ENCODE measurements at regions of chr6 and their contacts with region 1.

Region 1: DNA sequence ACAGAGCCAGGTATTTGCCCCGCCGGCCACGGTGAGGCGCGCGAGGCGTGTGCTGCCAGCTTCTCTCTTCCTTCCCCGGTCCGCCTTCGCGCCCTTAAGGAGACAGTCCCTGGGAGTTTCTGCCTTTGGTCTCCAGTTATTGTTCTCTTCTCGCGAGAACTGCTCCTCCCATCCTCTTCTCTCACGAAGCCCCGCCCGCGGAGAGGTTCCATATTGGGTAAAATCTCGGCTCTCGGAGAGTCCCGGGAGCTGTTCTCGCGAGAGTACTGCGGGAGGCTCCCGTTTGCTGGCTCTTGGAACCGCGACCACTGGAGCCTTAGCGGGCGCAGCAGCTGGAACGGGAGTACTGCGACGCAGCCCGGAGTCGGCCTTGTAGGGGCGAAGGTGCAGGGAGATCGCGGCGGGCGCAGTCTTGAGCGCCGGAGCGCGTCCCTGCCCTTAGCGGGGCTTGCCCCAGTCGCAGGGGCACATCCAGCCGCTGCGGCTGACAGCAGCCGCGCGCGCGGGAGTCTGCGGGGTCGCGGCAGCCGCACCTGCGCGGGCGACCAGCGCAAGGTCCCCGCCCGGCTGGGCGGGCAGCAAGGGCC is at the start of gene MAPK14:
- DNase-seq: peak; percentile 99
- H3K4me3 Mint-ChIP-seq: peak within 1 kb of the TSS; percentile 83
- H3K27ac Mint-ChIP-seq: peak within 1 kb of the TSS; percentile 86
- H3K4me1 Mint-ChIP-seq: peaks cover 16% of the 10 kb centered on the region
- H3K27me3 Mint-ChIP-seq: no peaks in the 10 kb centered on the region
- CTCF ChIP-seq: peak; percentile 84
- total RNA-seq, gene MAPK14: 59.5 and 60.9 TPM in 2 replicates

Region 2: GRCh38 chr6:35920793-35921732 is 106.5 kb before region 1 on chr6 and contains the start of gene SRPK1:
- CTCF ChIA-PET with region 1: no interaction called
- intact Hi-C with region 1: loop called (anchors 5 kb)
- DNase-seq: peak; percentile 93
- H3K4me3 Mint-ChIP-seq: peak within 1 kb of the TSS; percentile 95
- H3K27ac Mint-ChIP-seq: peak within 1 kb of the TSS; percentile 92
- H3K4me1 Mint-ChIP-seq: peaks cover 35% of the 10 kb centered on the region
- H3K27me3 Mint-ChIP-seq: no peaks in the 10 kb centered on the region
- CTCF ChIP-seq: no peak
- total RNA-seq, gene SRPK1: 126 and 138 TPM in 2 replicates

Region 3: DNA sequence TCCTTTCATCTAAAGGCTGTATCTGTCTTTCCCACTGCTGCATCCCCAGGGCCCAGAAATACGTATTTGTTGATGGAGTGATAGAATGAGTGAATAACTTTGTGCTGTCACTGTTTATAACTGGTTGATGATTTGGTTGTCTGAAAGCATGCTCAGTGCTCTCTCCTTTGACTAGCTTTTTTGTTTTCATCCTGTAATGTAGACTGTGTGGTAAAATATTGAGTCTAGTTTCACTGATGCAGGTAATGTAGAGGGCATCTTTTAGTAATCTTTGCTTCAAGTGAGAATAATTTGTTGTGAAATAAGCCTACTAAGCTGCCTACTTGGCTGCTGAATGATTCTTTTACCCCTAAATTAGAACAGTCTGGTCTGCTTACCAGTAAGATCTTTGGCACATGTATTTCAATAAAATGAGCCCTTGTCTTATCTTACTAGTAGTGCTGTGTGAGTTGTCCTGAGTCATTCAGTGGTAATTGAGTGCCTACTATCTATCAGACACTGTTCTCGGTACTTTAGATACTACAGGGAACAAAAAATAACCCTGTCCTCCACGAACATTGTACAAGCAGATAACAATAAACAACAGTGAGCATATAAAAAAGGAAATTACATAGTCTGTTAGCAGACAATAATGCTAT is 39.9 kb after region 1 on chr6:
- CTCF ChIA-PET with region 1: interaction called, 4 read pairs
- intact Hi-C with region 1: loop called (anchors 5 kb)
- DNase-seq: no peak
- H3K4me3 Mint-ChIP-seq: no peak overlapping the region
- H3K27ac Mint-ChIP-seq: peak overlapping the region; percentile 18
- H3K4me1 Mint-ChIP-seq: peaks cover 47% of the 10 kb centered on the region
- H3K27me3 Mint-ChIP-seq: no peaks in the 10 kb centered on the region
- CTCF ChIP-seq: no peak

Region 4: DNA sequence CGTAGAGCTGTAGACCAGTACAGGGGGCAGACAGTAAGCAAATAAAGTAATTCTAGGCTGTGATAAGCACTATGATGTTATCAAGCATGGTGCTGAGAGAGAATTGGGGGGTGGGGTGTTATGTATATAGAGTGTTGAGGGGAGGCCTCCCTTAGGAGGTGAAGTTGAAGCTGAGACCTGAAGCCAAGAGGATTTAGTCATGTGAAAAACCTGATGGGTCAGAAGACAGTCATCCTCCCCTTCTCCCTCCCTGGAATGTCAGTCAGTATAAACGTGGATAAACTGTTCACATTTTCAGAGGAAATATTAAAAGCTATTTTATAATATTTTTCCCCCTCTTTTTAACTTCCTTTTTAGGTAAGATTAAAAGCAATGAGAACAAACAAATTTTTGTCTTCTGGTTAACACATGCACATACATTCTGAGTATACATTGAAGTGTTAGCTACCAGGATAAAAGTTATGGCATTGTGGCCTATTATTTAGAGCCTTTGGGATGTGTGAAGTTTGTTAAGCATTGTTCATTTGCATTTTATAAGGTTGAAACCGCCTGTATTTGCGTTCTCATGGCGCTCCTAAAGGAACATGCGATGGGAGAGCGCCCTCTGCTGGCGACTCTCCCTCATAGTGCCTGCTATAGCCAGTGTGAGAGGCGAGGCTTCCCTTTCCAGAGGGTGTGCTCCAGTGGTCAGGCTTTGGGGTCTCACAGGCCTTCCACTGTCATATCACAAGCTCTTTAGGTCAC is 67.3 kb after region 1 on chr6:
- CTCF ChIA-PET with region 1: interaction called, 33 read pairs
- intact Hi-C with region 1: loop called (anchors 1 kb)
- DNase-seq: peak; percentile 87
- H3K4me3 Mint-ChIP-seq: no peak overlapping the region
- H3K27ac Mint-ChIP-seq: peak overlapping the region; percentile 89
- H3K4me1 Mint-ChIP-seq: peaks cover 27% of the 10 kb centered on the region
- H3K27me3 Mint-ChIP-seq: no peaks in the 10 kb centered on the region
- CTCF ChIP-seq: peak; percentile 96

Region 5: DNA sequence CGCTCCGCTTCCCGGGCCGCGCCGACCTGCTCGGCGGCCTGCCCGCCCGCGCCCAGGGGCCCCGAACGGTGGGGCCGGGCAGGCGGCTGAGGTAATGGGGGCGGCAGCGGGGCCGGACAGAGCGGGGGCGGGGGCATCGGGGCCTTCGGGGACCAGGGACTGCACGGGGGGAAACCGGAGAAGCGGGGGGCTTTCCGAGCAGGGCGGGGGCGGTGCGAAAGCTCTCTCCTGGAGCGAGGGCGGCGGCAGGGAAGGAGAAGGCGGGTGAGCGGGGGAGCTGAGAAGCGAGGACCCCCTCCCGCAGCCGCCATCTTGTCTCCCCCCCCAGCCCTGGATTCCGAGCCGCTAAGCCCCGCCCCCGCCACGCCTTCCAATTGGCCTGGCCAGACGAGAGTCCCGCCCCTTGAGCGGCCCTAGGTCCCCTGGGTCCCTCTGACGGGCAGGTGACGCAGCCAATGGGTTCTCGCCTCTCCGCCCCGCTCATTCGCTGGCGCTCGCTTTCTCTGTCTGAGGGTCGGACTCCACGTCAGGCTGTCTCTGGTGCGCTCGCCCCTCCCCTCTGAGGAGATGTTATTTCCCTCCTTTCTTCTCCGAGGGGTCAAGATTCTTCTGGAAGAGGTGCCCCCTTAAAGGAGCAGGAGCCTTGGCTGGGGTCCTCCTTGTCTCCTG is 169.4 kb after region 1 on chr6:
- CTCF ChIA-PET with region 1: no interaction called
- intact Hi-C with region 1: loop called (anchors 5 kb)
- DNase-seq: peak; percentile 100
- H3K4me3 Mint-ChIP-seq: peak overlapping the region; percentile 70
- H3K27ac Mint-ChIP-seq: peak overlapping the region; percentile 57
- H3K4me1 Mint-ChIP-seq: peaks cover 20% of the 10 kb centered on the region
- H3K27me3 Mint-ChIP-seq: no peaks in the 10 kb centered on the region
- CTCF ChIP-seq: no peak

Region 6: GRCh38 chr6:36387440-36388303 is 360.1 kb after region 1 on chr6 and contains the start of gene ETV7:
- CTCF ChIA-PET with region 1: no interaction called
- intact Hi-C with region 1: no loop called
- DNase-seq: peak; percentile 44
- H3K4me3 Mint-ChIP-seq: peak within 1 kb of the TSS; percentile 79
- H3K27ac Mint-ChIP-seq: peak within 1 kb of the TSS; percentile 55
- H3K4me1 Mint-ChIP-seq: no peaks in the 10 kb centered on the region
- H3K27me3 Mint-ChIP-seq: peaks cover 15% of the 10 kb centered on the region
- CTCF ChIP-seq: no peak
- total RNA-seq, gene ETV7: 2.6 and 8.7 TPM in 2 replicates

Measured in Calu3 (cell line).